Mammary epithelial cell (primary cell): ENCODE measurements at regions of chr5 and their contacts with region 1.

Region 1: DNA sequence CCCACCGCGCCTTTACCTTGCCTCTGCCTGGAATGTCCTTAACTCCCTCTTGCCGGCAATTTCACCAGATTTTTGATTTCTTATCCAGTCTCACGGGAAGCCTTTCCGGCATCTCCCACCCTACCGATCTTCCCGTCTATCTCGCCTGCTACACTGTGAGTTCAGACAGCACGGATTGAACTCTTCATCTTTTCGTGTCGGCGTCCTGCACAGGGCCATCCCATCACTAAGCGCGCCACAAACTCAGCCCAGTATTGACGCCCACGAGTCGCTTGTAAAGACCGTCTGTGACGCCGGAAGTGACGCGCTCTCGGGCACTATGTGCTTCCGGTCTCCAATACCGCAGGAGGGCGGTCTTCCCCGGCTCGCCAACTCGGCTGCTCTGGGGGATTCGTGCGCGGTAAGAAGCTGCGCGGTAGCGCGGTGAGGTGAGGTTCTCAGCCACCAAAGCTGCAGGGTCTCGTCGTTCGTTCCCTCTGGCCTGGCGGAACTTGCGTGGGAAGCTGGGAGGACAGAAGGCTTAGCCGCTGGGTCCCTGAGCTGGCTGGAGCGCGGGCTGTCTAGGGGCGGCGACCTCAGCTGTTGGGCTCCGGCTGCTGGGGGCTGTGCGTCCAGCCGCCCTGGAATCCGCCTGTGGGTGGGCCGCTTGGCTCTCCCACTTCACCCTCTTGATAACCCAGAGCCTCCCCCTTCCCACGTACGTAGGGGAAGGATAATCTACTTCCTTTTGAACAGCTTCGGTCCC is at the start of gene ZCCHC9:
- DNase-seq: peak; percentile 89
- H3K4me3 ChIP-seq: peak within 1 kb of the TSS; percentile 75 to 96 (median 95)
- H3K27ac ChIP-seq: peak within 1 kb of the TSS; percentile 92
- H3K4me1 ChIP-seq: peaks cover 26% of the 10 kb centered on the region
- H3K27me3 ChIP-seq: no peaks in the 10 kb centered on the region
- CTCF ChIP-seq: peak in 1 of 2 donors; percentile 35
- total RNA-seq, gene ZCCHC9: 13.7 to 28.1 TPM

Region 2: DNA sequence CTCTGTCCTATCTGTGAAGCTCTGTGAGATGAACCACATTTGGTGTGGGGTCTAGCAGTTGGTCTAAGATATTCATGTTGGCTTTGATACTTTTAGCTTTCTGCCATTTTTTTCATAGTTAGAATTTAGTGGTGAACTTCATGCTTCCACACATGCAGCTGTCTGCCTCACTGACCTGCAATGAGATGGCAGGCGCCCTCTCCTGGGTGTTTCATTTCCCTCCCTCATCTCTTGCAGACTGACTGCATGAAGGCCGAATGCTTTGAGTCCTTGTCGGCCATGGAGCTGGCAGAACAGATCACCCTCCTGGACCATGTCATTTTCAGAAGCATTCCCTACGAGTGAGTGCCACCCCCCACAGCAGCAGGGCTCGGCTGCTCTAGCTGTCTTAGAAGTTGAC is 94.4 kb before region 1 on chr5:
- CTCF ChIA-PET with region 1: no interaction called
- dilution Hi-C with region 1: no loop called
- in situ Hi-C with region 1: no loop called
- intact Hi-C with region 1: loop called (anchors 5 kb)
- DNase-seq: no peak
- H3K4me3 ChIP-seq: no peak overlapping the region
- H3K27ac ChIP-seq: no peak overlapping the region
- H3K4me1 ChIP-seq: peaks cover 9% of the 10 kb centered on the region
- H3K27me3 ChIP-seq: no peaks in the 10 kb centered on the region
- CTCF ChIP-seq: peak in 1 of 2 donors; percentile 25

Region 3: GRCh38 chr5:81247441-81247972 is 53.9 kb before region 1 on chr5:
- CTCF ChIA-PET with region 1: no interaction called
- dilution Hi-C with region 1: no loop called
- in situ Hi-C with region 1: no loop called
- intact Hi-C with region 1: loop called (anchors 5 kb)
- DNase-seq: peak; percentile 24
- H3K4me3 ChIP-seq: no peak overlapping the region
- H3K27ac ChIP-seq: no peak overlapping the region
- H3K4me1 ChIP-seq: peaks cover 18% of the 10 kb centered on the region
- H3K27me3 ChIP-seq: no peaks in the 10 kb centered on the region
- CTCF ChIP-seq: no peak

Region 4: GRCh38 chr5:81268521-81269196 is 32.8 kb before region 1 on chr5:
- CTCF ChIA-PET with region 1: interaction called, 3 read pairs
- dilution Hi-C with region 1: no loop called
- in situ Hi-C with region 1: no loop called
- intact Hi-C with region 1: loop called (anchors 1 kb)
- DNase-seq: peak; percentile 75
- H3K4me3 ChIP-seq: no peak overlapping the region
- H3K27ac ChIP-seq: no peak overlapping the region
- H3K4me1 ChIP-seq: peaks cover 11% of the 10 kb centered on the region
- H3K27me3 ChIP-seq: no peaks in the 10 kb centered on the region
- CTCF ChIP-seq: no peak

Region 5: GRCh38 chr5:81315336-81315735 is 13.9 kb after region 1 on chr5:
- CTCF ChIA-PET with region 1: no interaction called
- dilution Hi-C with region 1: no loop called
- in situ Hi-C with region 1: no loop called
- intact Hi-C with region 1: no loop called
- DNase-seq: peak; percentile 37
- H3K4me3 ChIP-seq: no peak overlapping the region
- H3K27ac ChIP-seq: no peak overlapping the region
- H3K4me1 ChIP-seq: no peaks in the 10 kb centered on the region
- H3K27me3 ChIP-seq: no peaks in the 10 kb centered on the region
- CTCF ChIP-seq: no peak

Region 6: GRCh38 chr5:81326554-81326953 is 25.1 kb after region 1 on chr5:
- CTCF ChIA-PET with region 1: no interaction called
- dilution Hi-C with region 1: no loop called
- in situ Hi-C with region 1: no loop called
- intact Hi-C with region 1: no loop called
- DNase-seq: no peak
- H3K4me3 ChIP-seq: no peak overlapping the region
- H3K27ac ChIP-seq: no peak overlapping the region
- H3K4me1 ChIP-seq: no peaks in the 10 kb centered on the region
- H3K27me3 ChIP-seq: peaks cover 2% of the 10 kb centered on the region
- CTCF ChIP-seq: no peak

Region 7: DNA sequence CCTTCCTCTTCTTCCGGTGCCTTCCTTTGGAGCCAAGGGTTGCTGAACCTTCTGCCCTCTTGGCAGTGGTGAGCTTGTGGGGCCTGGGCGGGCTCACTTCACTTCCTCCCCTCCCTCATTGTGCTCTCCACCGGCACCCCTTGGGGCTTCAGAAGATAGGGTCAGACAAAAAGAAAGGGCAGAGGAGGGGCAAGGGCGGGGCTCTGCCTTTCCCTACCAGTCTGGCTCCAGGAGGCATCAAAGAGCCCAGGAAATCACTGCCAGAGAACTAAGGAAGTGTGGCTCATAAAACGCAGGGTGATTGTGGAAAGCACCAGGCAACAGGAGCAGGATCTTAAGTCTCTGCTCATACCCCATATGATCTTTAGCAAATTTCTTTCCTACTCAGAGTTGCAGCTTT is 57.7 kb after region 1 on chr5:
- CTCF ChIA-PET with region 1: interaction called, 10 read pairs
- dilution Hi-C with region 1: no loop called
- in situ Hi-C with region 1: no loop called
- intact Hi-C with region 1: no loop called
- DNase-seq: no peak
- H3K4me3 ChIP-seq: no peak overlapping the region
- H3K27ac ChIP-seq: no peak overlapping the region
- H3K4me1 ChIP-seq: no peaks in the 10 kb centered on the region
- H3K27me3 ChIP-seq: no peaks in the 10 kb centered on the region
- CTCF ChIP-seq: no peak

Region 8: DNA sequence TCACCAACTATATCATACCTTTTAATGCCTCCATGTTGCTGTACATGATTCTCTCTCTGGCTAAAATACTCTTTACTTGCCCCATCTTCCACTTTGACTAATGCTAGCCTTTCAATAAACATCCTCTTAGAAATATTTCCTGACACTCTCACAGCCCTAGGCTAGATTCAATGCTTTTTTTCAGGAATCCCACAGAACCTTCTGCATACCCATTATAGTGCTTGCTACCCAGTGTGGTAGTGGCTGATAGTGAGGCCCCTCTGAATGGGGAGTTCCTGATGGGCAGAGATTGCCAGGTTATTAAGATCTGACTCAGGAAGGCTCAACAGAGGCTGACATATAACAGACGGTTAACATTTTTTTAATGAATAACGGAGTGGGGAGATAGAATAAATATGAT is 437.8 kb after region 1 on chr5:
- CTCF ChIA-PET with region 1: interaction called, 12 read pairs
- dilution Hi-C with region 1: no loop called
- in situ Hi-C with region 1: no loop called
- intact Hi-C with region 1: no loop called
- DNase-seq: no peak
- H3K4me3 ChIP-seq: no peak overlapping the region
- H3K27ac ChIP-seq: no peak overlapping the region
- H3K4me1 ChIP-seq: no peaks in the 10 kb centered on the region
- H3K27me3 ChIP-seq: no peaks in the 10 kb centered on the region
- CTCF ChIP-seq: no peak

Region 9: GRCh38 chr5:82991678-82992323 is 1690.4 kb after region 1 on chr5:
- CTCF ChIA-PET with region 1: no interaction called
- dilution Hi-C with region 1: no loop called
- in situ Hi-C with region 1: no loop called
- intact Hi-C with region 1: no loop called
- DNase-seq: no peak
- H3K4me3 ChIP-seq: no peak overlapping the region
- H3K27ac ChIP-seq: no peak overlapping the region
- H3K4me1 ChIP-seq: peaks cover 5% of the 10 kb centered on the region
- H3K27me3 ChIP-seq: no peaks in the 10 kb centered on the region
- CTCF ChIP-seq: no peak